B cell (primary cell): ENCODE measurements at regions of chr12 and their contacts with region 1.

Region 1: GRCh38 chr12:116066381-116067230 is 210.9 kb downstream of the MED13L start:
- DNase-seq: peak; percentile 73
- ATAC-seq: peak; percentile 74
- H3K4me3 ChIP-seq: no peak overlapping the region
- H3K4me3 Mint-ChIP-seq: no peak overlapping the region
- H3K27ac ChIP-seq: no peak overlapping the region
- H3K27ac Mint-ChIP-seq: peak overlapping the region; percentile 21
- H3K4me1 ChIP-seq: peaks cover 8% of the 10 kb centered on the region in 2 donors
- H3K4me1 Mint-ChIP-seq: peaks cover 42% of the 10 kb centered on the region
- H3K27me3 ChIP-seq: no peaks in the 10 kb centered on the region
- H3K27me3 Mint-ChIP-seq: no peaks in the 10 kb centered on the region
- CTCF ChIP-seq: peak; percentile 97

Region 2: DNA sequence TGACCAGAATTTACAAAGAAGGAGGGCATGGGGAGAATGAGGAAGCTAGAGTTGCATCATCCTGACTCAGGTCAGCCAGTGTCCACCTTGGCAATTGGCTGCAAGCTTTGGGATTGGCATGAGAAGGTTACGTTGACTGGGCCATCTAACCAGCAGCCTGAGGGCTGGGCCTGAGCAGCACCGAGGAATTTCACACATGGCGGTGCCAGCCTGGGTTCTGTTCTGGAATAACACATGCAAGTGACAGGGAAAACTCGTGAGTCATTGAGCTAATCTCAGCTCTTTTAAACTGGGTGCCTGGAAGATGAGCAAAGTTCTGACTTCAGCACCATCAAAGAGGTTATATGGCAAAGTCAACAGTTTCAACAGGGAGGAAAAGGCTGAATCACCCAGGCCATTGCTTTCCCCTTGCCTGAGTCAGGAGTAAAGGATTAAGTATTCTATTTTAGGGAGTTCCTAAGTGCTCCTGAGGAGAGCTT is 839.4 kb before region 1 on chr12:
- CTCF ChIA-PET with region 1: no interaction called
- POLR2A ChIA-PET with region 1: no interaction called
- intact Hi-C with region 1: no loop called
- DNase-seq: no peak
- ATAC-seq: no peak
- H3K4me3 ChIP-seq: no peak overlapping the region
- H3K4me3 Mint-ChIP-seq: no peak overlapping the region
- H3K27ac ChIP-seq: no peak overlapping the region
- H3K27ac Mint-ChIP-seq: no peak overlapping the region
- H3K4me1 ChIP-seq: no peaks in the 10 kb centered on the region
- H3K4me1 Mint-ChIP-seq: no peaks in the 10 kb centered on the region
- H3K27me3 ChIP-seq: peaks cover 0 to 3% (median 0%) of the 10 kb centered on the region in 4 experiments
- H3K27me3 Mint-ChIP-seq: no peaks in the 10 kb centered on the region
- CTCF ChIP-seq: no peak

Region 3: GRCh38 chr12:116015525-116015924 is 51.1 kb before region 1 on chr12:
- CTCF ChIA-PET with region 1: interaction called, 3 read pairs
- POLR2A ChIA-PET with region 1: no interaction called
- intact Hi-C with region 1: loop called (anchors 10 kb)
- DNase-seq: peak; percentile 27
- ATAC-seq: peak; percentile 49
- H3K4me3 ChIP-seq: no peak overlapping the region
- H3K4me3 Mint-ChIP-seq: no peak overlapping the region
- H3K27ac ChIP-seq: no peak overlapping the region
- H3K27ac Mint-ChIP-seq: no peak overlapping the region
- H3K4me1 ChIP-seq: no peaks in the 10 kb centered on the region
- H3K4me1 Mint-ChIP-seq: no peaks in the 10 kb centered on the region
- H3K27me3 ChIP-seq: no peaks in the 10 kb centered on the region
- H3K27me3 Mint-ChIP-seq: no peaks in the 10 kb centered on the region
- CTCF ChIP-seq: peak; percentile 27

Region 4: GRCh38 chr12:116194935-116195431 is 128.4 kb after region 1 on chr12:
- CTCF ChIA-PET with region 1: no interaction called
- POLR2A ChIA-PET with region 1: no interaction called
- intact Hi-C with region 1: loop called (anchors 5 kb)
- DNase-seq: peak; percentile 84
- ATAC-seq: peak; percentile 84
- H3K4me3 ChIP-seq: peak overlapping the region in 4 of 5 experiments; percentile 4 to 23 (median 14)
- H3K4me3 Mint-ChIP-seq: peak overlapping the region; percentile 79
- H3K27ac ChIP-seq: peak overlapping the region; percentile 76 to 80
- H3K27ac Mint-ChIP-seq: peak overlapping the region; percentile 92
- H3K4me1 ChIP-seq: peaks cover 28 to 45% of the 10 kb centered on the region in 2 donors
- H3K4me1 Mint-ChIP-seq: peaks cover 62% of the 10 kb centered on the region
- H3K27me3 ChIP-seq: no peaks in the 10 kb centered on the region
- H3K27me3 Mint-ChIP-seq: no peaks in the 10 kb centered on the region
- CTCF ChIP-seq: peak; percentile 21

Region 5: DNA sequence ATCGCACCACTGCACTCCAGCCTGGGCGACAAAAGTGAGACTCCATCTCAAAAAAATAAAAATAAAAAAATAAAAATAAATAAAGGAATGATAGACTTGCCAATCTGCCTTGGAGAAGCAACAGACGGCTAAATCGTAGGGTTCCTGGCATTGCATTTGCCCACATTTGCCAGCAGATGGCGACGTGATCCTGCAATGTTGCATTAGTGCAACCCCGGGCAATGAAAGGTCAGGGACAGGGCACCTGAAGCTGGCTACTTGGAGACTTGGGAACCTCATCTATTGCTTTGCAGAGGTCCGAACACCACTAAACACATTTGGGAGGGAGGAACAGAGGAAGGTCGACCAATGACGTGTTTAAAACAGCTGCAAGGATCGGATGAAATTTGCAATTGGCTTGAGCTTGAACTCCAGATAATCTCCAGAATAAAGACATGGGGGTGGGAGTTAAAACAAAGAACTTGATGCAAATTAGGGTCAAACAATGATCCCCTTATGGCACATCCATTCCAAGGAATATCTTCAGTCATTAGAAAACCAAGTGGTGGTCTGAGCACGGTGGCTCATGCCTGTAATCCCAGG is 636.7 kb after region 1 on chr12:
- CTCF ChIA-PET with region 1: no interaction called
- POLR2A ChIA-PET with region 1: no interaction called
- intact Hi-C with region 1: loop called (anchors 10 kb)
- DNase-seq: peak; percentile 74
- ATAC-seq: peak; percentile 81
- H3K4me3 ChIP-seq: no peak overlapping the region
- H3K4me3 Mint-ChIP-seq: no peak overlapping the region
- H3K27ac ChIP-seq: no peak overlapping the region
- H3K27ac Mint-ChIP-seq: no peak overlapping the region
- H3K4me1 ChIP-seq: peaks cover 9 to 11% of the 10 kb centered on the region in 2 donors
- H3K4me1 Mint-ChIP-seq: peaks cover 12% of the 10 kb centered on the region
- H3K27me3 ChIP-seq: peaks cover 0 to 3% (median 0%) of the 10 kb centered on the region in 4 experiments
- H3K27me3 Mint-ChIP-seq: peaks cover 8% of the 10 kb centered on the region
- CTCF ChIP-seq: peak; percentile 98